ENCODE measurements at regions of chrX and their contacts with region 1.

Region 1: DNA sequence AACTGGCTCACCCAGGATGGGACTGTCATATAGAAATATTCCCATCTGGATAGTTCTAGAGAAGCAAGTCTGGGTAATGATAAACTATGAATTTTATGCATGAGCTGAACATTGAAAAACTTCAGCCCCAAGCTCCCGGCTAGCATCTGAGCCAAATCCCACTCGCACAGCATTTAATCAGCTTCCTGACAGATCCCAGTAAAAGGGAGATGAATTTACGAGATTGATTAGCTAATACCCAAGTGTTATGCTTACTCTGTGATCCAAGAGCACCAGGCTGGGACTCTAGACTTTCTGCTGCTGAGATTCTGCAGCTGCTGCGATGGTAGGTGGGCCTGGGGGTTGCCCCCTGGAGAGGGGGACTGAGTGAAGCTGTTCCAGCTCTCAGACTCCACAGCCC is 28.0 kb downstream of the FRMPD3 start:
- DNase-seq: no peak
- H3K4me3 ChIP-seq: no peak overlapping the region
- H3K27ac ChIP-seq: no peak overlapping the region
- H3K4me1 ChIP-seq: peaks cover 0 to 2% (median 0%) of the 10 kb centered on the region in 4 experiments; a peak in 1 of 7 replicates
- H3K27me3 ChIP-seq: no peaks in the 10 kb centered on the region
- CTCF ChIP-seq: no peak
- EP300 ChIP-seq: no peak
- POLR2A ChIP-seq: no peak
- RAD21 ChIP-seq: no peak

Region 2: DNA sequence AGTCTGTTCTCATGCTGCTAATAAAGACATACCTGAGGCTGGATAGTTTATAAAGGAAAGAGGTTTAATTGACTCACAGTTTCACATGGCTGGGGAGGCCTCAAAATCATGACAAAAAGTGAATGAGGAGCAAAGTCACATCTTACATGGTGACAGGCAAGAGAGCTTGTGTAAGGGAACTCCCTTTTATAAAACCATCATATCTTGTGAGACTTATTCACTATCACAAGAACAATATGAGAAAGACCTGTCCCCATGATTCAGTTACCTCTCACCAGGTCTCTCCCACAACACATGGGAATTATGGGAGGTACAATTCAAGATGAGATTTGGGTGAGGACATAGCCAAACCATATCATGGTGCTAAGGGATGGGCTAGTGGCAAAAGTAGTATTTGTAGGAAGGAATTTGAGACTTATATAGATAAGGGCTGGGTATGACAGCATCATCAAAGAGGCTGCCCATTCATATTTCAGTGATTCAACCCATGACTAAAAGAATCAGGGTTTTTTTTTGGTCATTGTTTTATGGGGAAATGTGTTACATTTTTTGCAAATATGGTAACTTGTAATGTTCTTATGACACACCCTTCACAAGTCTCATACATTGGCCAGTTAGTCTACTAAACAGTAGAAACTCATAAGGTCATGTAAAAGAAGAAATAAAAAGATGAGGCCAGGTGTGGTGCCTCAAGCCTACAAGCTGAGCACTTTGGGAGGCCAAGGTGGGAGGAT is 305.9 kb before region 1 on chrX:
- CTCF ChIA-PET with region 1: no interaction called
- POLR2A ChIA-PET with region 1: no interaction called
- DNase-seq: no peak
- H3K4me3 ChIP-seq: no peak overlapping the region
- H3K27ac ChIP-seq: no peak overlapping the region
- H3K4me1 ChIP-seq: no peaks in the 10 kb centered on the region
- H3K27me3 ChIP-seq: no peaks in the 10 kb centered on the region
- CTCF ChIP-seq: no peak
- EP300 ChIP-seq: no peak
- POLR2A ChIP-seq: no peak
- RAD21 ChIP-seq: no peak

Region 3: GRCh38 chrX:107450823-107451509 is 26.4 kb before region 1 on chrX:
- CTCF ChIA-PET with region 1: interaction called, 13 read pairs
- POLR2A ChIA-PET with region 1: no interaction called
- DNase-seq: peak in 1 of 2 experiments; percentile 73
- H3K4me3 ChIP-seq: peak overlapping the region; percentile 39 to 75 (median 46); a peak in 7 of 8 replicates
- H3K27ac ChIP-seq: no peak overlapping the region
- H3K4me1 ChIP-seq: peaks cover 3 to 20% (median 11%) of the 10 kb centered on the region in 4 experiments
- H3K27me3 ChIP-seq: peaks cover 0 to 21% (median 9%) of the 10 kb centered on the region in 4 experiments; a peak in 6 of 7 replicates
- CTCF ChIP-seq: peak; percentile 36 to 58 (median 44); a peak in 3 of 4 replicates
- EP300 ChIP-seq: no peak
- POLR2A ChIP-seq: no peak
- RAD21 ChIP-seq: peak in 1 of 2 experiments; percentile 38; a peak in 2 of 4 replicates

Region 4: DNA sequence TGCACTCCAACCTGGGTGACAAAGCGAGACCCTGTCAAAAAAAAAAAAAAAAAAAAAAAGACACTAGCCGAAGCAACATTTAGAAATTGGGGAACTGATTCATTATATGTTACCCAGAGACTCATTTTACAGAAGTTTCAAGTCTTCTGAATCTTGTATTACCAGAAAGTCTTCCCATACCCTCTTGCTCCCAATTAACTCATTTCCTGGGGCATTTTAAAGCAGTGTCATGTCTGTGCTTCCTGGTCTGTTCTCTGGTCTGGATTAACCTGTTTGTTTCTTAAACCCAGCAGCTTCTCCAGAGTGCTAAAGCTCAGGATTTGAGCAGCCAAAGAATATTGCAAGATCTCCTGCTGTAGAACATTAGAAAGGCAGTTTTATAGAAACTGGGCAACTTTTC is 15.7 kb after region 1 on chrX:
- CTCF ChIA-PET with region 1: no interaction called
- POLR2A ChIA-PET with region 1: no interaction called
- DNase-seq: no peak
- H3K4me3 ChIP-seq: no peak overlapping the region
- H3K27ac ChIP-seq: no peak overlapping the region
- H3K4me1 ChIP-seq: no peaks in the 10 kb centered on the region
- H3K27me3 ChIP-seq: no peaks in the 10 kb centered on the region
- CTCF ChIP-seq: no peak
- EP300 ChIP-seq: no peak
- POLR2A ChIP-seq: no peak
- RAD21 ChIP-seq: no peak

Measured in H1 (cell line).